HepG2 (cell line): ENCODE measurements at regions of chr22 and their contacts with region 1.

Region 1: DNA sequence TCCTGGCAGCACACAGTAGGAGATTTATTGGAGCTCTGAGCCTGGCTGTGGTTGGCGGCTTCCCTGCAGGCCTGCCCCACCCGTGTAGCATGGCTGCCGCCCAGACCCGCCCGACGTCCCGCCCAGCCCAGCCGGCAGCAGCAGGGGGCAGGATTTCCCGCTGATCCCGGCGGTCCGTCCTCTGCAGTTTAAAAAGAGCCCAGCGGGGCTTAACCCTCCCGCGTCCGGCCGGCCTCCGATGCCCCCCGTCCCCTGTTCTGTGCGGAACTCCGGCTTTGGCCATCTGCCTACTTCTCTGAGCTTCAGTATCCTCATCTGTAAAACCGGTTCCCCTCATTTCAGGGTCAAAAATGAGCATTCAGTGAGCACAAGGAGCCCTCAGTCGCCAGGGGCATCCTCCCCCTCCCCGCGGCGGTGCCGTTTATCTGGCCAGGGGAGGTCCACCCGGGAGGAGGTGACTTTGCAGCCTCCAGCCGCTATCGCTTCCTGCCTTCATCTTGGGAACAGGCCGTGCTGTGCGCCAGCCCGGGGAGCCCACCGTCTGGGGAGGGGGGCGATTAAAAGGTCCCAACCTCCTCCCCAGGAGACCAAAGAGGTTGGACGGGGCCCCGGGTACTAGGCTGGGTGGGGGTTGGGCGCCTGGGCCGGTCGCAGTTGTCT is at the start of gene GAS2L1:
- DNase-seq: peak; percentile 54
- ATAC-seq: peak; percentile 66
- H3K4me3 ChIP-seq: peak within 1 kb of the TSS; percentile 74 to 88 (median 83)
- H3K27ac ChIP-seq: peak within 1 kb of the TSS; percentile 46
- H3K4me1 ChIP-seq: peaks cover 67% of the 10 kb centered on the region
- H3K27me3 ChIP-seq: no peaks in the 10 kb centered on the region
- CTCF ChIP-seq: peak; percentile 92
- EP300 ChIP-seq: no peak
- POLR2A ChIP-seq: no peak
- RAD21 ChIP-seq: peak; percentile 79
- total RNA-seq, gene GAS2L1: 2.6 and 3.3 TPM in 2 replicates

Region 2: DNA sequence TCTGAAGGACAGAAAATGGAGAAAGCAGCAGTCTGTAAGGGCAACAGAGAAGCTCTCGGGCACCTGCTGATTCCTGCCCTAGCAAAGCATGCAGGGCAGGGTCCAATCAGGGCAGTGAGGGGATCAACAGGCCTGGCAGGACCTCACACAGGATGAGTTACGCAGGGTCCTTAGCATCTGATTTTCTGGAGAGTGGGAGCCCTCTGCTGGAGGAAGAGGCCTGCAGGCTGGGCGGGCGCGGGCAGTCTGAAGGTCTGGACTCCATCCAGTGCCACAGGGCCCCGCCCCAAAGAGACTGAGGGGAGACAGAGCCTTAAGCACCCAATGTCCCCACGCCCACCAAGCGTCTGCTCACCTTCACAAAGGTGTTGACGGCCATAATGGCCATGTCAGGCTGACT is 53.2 kb after region 1 on chr22:
- CTCF ChIA-PET with region 1: interaction called, 8 read pairs
- POLR2A ChIA-PET with region 1: no interaction called
- in situ Hi-C with region 1: loop called (anchors 5 kb)
- intact Hi-C with region 1: loop called (anchors 1 kb)
- DNase-seq: peak; percentile 50
- ATAC-seq: peak; percentile 95
- H3K4me3 ChIP-seq: no peak overlapping the region
- H3K27ac ChIP-seq: no peak overlapping the region
- H3K4me1 ChIP-seq: no peaks in the 10 kb centered on the region
- H3K27me3 ChIP-seq: no peaks in the 10 kb centered on the region
- CTCF ChIP-seq: peak; percentile 83
- EP300 ChIP-seq: no peak
- POLR2A ChIP-seq: no peak
- RAD21 ChIP-seq: peak; percentile 76